ENCODE measurements at regions of chr3 and their contacts with region 1.

Region 1: GRCh38 chr3:124078953-124079911 is 87.3 kb upstream of the ROPN1 start:
- DNase-seq: no peak
- H3K4me3 ChIP-seq: no peak overlapping the region
- H3K27ac ChIP-seq: peak overlapping the region in 1 of 2 donors; percentile 9
- H3K4me1 ChIP-seq: peaks cover 0 to 70% (median 21%) of the 10 kb centered on the region in 4 donors
- H3K27me3 ChIP-seq: no peaks in the 10 kb centered on the region
- CTCF ChIP-seq: peak; percentile 67 to 73

Region 2: GRCh38 chr3:124032648-124033359 is 46.4 kb before region 1 on chr3:
- intact Hi-C with region 1: loop called (anchors 2 kb)
- DNase-seq: peak; percentile 76 to 92
- H3K4me3 ChIP-seq: peak overlapping the region; percentile 80 to 90
- H3K27ac ChIP-seq: peak overlapping the region; percentile 86 to 96
- H3K4me1 ChIP-seq: peaks cover 0 to 28% (median 4%) of the 10 kb centered on the region in 4 donors
- H3K27me3 ChIP-seq: no peaks in the 10 kb centered on the region
- CTCF ChIP-seq: peak; percentile 72 to 83